ENCODE measurements at regions of chr11 and their contacts with region 1.

Region 1: GRCh38 chr11:65117216-65118096 is at the start of gene ZNHIT2:
- DNase-seq: peak; percentile 99 to 100 (median 100)
- ATAC-seq: peak; percentile 63
- H3K4me3 ChIP-seq: peak within 1 kb of the TSS; percentile 82
- H3K4me3 Mint-ChIP-seq: peak within 1 kb of the TSS; percentile 96
- H3K27ac ChIP-seq: peak within 1 kb of the TSS; percentile 79 to 85
- H3K27ac Mint-ChIP-seq: peak within 1 kb of the TSS; percentile 91
- H3K4me1 ChIP-seq: peaks cover 66% of the 10 kb centered on the region
- H3K4me1 Mint-ChIP-seq: peaks cover 52% of the 10 kb centered on the region
- H3K27me3 ChIP-seq: no peaks in the 10 kb centered on the region
- H3K27me3 Mint-ChIP-seq: no peaks in the 10 kb centered on the region
- CTCF ChIP-seq: peak; percentile 88
- total RNA-seq, gene ZNHIT2: 9.0 to 9.5 TPM

Region 2: GRCh38 chr11:64742889-64743590 is 374.4 kb before region 1 on chr11:
- CTCF ChIA-PET with region 1: no interaction called
- POLR2A ChIA-PET with region 1: interaction called, 15 read pairs
- intact Hi-C with region 1: no loop called
- DNase-seq: peak; percentile 58 to 87 (median 72)
- ATAC-seq: peak; percentile 13
- H3K4me3 ChIP-seq: peak overlapping the region; percentile 98
- H3K4me3 Mint-ChIP-seq: peak overlapping the region; percentile 85
- H3K27ac ChIP-seq: peak overlapping the region; percentile 89 to 95
- H3K27ac Mint-ChIP-seq: peak overlapping the region; percentile 92
- H3K4me1 ChIP-seq: peaks cover 67% of the 10 kb centered on the region
- H3K4me1 Mint-ChIP-seq: peaks cover 46% of the 10 kb centered on the region
- H3K27me3 ChIP-seq: no peaks in the 10 kb centered on the region
- H3K27me3 Mint-ChIP-seq: no peaks in the 10 kb centered on the region
- CTCF ChIP-seq: peak; percentile 80

Region 3: GRCh38 chr11:64846998-64847666 is 270.3 kb before region 1 on chr11:
- CTCF ChIA-PET with region 1: no interaction called
- POLR2A ChIA-PET with region 1: interaction called, 8 read pairs
- intact Hi-C with region 1: loop called (anchors 1 to 5 kb)
- DNase-seq: peak; percentile 87 to 98 (median 92)
- ATAC-seq: peak; percentile 62
- H3K4me3 ChIP-seq: no peak overlapping the region
- H3K4me3 Mint-ChIP-seq: peak overlapping the region; percentile 76
- H3K27ac ChIP-seq: no peak overlapping the region
- H3K27ac Mint-ChIP-seq: peak overlapping the region; percentile 85
- H3K4me1 ChIP-seq: peaks cover 77% of the 10 kb centered on the region
- H3K4me1 Mint-ChIP-seq: peaks cover 64% of the 10 kb centered on the region
- H3K27me3 ChIP-seq: no peaks in the 10 kb centered on the region
- H3K27me3 Mint-ChIP-seq: no peaks in the 10 kb centered on the region
- CTCF ChIP-seq: peak; percentile 97

Region 4: GRCh38 chr11:64971421-64972233 is 145.8 kb before region 1 on chr11 and contains the start of gene MAJIN:
- CTCF ChIA-PET with region 1: no interaction called
- POLR2A ChIA-PET with region 1: interaction called, 10 read pairs
- intact Hi-C with region 1: no loop called
- DNase-seq: peak; percentile 76 to 95 (median 90)
- ATAC-seq: peak; percentile 82
- H3K4me3 ChIP-seq: peak within 1 kb of the TSS; percentile 58
- H3K4me3 Mint-ChIP-seq: peak within 1 kb of the TSS; percentile 81
- H3K27ac ChIP-seq: peak within 1 kb of the TSS in 1 of 2 donors; percentile 29
- H3K27ac Mint-ChIP-seq: peak within 1 kb of the TSS; percentile 83
- H3K4me1 ChIP-seq: peaks cover 23% of the 10 kb centered on the region
- H3K4me1 Mint-ChIP-seq: peaks cover 26% of the 10 kb centered on the region
- H3K27me3 ChIP-seq: no peaks in the 10 kb centered on the region
- H3K27me3 Mint-ChIP-seq: no peaks in the 10 kb centered on the region
- CTCF ChIP-seq: no peak
- total RNA-seq, gene MAJIN: 0.50 to 0.55 TPM

Region 5: GRCh38 chr11:65040847-65041621 is 76.4 kb before region 1 on chr11 and contains the start of gene SAC3D1:
- CTCF ChIA-PET with region 1: interaction called, 6 read pairs
- POLR2A ChIA-PET with region 1: interaction called, 15 read pairs
- intact Hi-C with region 1: no loop called
- DNase-seq: peak; percentile 70 to 95 (median 80)
- ATAC-seq: peak; percentile 87
- H3K4me3 ChIP-seq: peak within 1 kb of the TSS; percentile 82
- H3K4me3 Mint-ChIP-seq: peak within 1 kb of the TSS; percentile 98
- H3K27ac ChIP-seq: peak within 1 kb of the TSS; percentile 56 to 84
- H3K27ac Mint-ChIP-seq: peak within 1 kb of the TSS; percentile 93
- H3K4me1 ChIP-seq: peaks cover 32% of the 10 kb centered on the region
- H3K4me1 Mint-ChIP-seq: peaks cover 20% of the 10 kb centered on the region
- H3K27me3 ChIP-seq: no peaks in the 10 kb centered on the region
- H3K27me3 Mint-ChIP-seq: no peaks in the 10 kb centered on the region
- CTCF ChIP-seq: no peak
- total RNA-seq, gene SAC3D1: 0.49 to 0.78 TPM

Region 6: DNA sequence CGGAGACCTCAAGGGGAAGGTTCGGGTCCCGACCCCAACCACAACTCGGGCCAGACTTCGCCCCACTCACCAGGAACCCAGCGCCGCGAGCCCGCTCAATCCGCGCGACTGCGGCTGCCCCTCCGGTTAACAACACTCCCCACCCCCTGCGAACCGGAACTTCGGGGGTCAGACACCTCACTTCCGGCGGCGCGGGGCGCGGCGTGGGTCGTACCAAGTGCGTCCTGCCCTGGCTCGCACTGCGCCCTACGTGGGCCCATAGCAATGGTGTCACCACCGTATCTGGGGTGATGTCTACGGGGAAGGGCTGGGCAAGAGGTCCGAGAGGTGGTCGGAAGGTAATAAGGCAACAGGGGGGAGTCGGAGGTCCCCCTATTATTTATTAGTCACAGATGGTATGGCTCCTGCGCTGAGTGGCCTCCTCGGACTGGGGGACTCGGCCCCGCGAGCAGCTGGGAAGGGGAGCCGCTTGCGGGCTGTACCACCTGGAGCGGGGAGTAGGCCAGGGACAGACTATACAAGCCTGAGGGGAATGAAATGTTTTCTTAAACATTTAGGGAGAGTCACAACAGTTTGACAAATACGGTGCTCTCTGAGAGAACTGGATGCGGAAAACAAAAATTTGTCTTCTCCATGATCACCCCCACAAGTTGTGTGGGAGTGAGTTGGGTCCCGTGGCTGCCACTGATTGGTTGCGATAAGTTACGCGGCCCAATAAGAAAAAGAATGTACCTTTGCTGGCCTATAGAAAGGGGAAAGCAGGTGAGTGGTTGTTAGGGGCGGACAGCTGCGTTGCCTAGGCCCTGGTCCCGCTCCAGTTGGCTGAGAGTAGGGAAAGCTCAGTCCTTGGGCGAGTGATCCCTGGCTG is 17.2 kb after region 1 on chr11 and contains the start of gene SYVN1:
- CTCF ChIA-PET with region 1: interaction called, 7 read pairs
- POLR2A ChIA-PET with region 1: interaction called, 136 read pairs
- intact Hi-C with region 1: loop called in 1 of 2 experiments (anchors 2 kb)
- DNase-seq: peak; percentile 86 to 96 (median 90)
- ATAC-seq: peak; percentile 88
- H3K4me3 ChIP-seq: peak within 1 kb of the TSS; percentile 83
- H3K4me3 Mint-ChIP-seq: peak within 1 kb of the TSS; percentile 99
- H3K27ac ChIP-seq: peak within 1 kb of the TSS; percentile 96 to 99
- H3K27ac Mint-ChIP-seq: peak within 1 kb of the TSS; percentile 100
- H3K4me1 ChIP-seq: peaks cover 47% of the 10 kb centered on the region
- H3K4me1 Mint-ChIP-seq: peaks cover 45% of the 10 kb centered on the region
- H3K27me3 ChIP-seq: no peaks in the 10 kb centered on the region
- H3K27me3 Mint-ChIP-seq: no peaks in the 10 kb centered on the region
- CTCF ChIP-seq: no peak
- total RNA-seq, gene SYVN1: 89.1 to 96.8 TPM